GM10248 (cell line): ENCODE measurements at regions of chr20 and their contacts with region 1.

Region 1: DNA sequence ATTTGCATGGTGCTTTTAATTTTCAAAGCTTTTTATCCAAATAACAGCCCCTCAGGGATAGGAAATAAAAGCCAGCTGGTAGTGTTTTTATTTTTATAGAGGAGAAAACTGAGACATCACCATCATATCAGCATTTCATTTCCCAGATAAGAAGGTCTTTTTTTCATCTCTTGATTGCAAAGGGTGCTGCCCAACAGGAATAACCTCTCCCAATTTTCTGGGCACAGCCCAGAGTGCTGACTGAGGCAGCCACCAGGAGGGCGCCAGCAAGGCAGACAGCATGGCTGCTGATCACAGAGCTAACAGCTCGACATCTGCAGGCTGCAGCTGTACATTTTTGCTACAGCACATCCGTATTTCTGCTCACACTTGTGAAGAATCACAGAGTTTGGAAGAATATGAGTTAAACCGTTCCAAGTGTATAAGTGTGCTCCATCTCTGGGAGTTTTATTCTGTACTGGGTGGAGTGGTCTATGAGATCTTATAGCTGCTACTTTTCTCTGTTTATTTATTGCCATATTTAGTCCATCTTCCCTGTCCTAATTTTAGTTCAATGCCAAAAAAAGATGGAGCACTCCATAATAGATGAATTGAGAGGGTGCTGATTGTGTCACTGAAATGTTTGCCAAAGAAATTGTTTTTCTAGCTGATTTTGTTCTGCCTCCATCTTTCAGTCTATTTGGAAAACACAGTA is 85.5 kb upstream of the C20orf144 start:
- DNase-seq: no peak
- CTCF ChIP-seq: no peak

Region 2: DNA sequence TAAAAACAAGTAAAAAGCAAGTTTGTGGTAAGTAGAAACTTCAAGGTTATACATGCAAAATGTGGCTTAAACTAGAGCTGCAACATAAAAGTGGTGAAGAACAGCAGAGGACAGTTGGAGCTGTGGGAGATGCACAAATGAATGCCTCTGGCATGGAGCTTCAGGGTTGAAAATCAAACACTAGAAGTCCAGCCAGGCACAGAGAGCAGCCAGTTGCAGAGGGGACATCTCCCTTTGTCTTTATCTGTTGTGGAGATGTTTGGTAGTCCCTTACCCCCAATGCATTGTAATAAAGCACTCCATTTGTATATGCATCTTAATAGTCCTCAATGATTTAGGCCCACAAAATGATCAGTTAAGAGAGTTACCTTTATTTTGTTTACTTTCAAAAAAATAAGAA is 12.5 kb after region 1 on chr20:
- CTCF ChIA-PET with region 1: interaction called, 14 read pairs
- POLR2A ChIA-PET with region 1: no interaction called
- DNase-seq: no peak
- CTCF ChIP-seq: no peak